T-cell (primary cell): ENCODE measurements at regions of chr11 and their contacts with region 1.

Region 1: DNA sequence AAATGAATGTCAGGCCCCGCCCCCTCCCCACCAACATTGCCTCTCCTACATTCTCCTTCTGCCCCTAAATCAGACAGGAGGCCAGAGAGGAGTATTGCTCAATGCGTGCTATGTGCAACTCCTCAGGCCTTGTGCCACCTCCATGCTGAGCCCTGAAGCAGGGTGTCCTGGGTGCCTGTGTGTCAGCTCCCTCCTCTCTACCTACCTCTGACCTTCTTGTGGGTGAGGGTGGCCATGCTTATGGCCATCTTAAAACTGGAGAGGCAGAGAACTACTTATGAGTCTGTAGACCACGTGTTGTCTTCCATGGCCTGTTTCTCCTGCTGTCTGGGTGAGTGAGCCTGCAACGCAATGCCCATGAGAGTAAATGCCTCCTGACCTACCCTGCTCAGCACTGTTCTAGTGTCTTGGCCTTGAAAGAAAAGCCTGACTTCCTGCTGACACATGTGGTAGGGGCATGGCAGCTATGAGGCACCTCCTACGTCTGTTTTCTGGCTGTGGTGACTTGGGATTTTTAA is 10.5 kb downstream of the MCAM start:
- DNase-seq: peak in 32 of 35 experiments; percentile 27 to 86 (median 61)
- ATAC-seq: peak; percentile 89 to 97 (median 92)
- H3K4me3 ChIP-seq: peak overlapping the region in 1 of 2 donors; percentile 33
- H3K4me3 Mint-ChIP-seq: peak overlapping the region; percentile 10 to 79 (median 44)
- H3K27ac ChIP-seq: peak overlapping the region; percentile 71
- H3K27ac Mint-ChIP-seq: peak overlapping the region; percentile 92 to 95
- H3K4me1 ChIP-seq: peaks cover 27 to 30% of the 10 kb centered on the region in 2 experiments
- H3K4me1 Mint-ChIP-seq: peaks cover 30 to 33% (median 32%) of the 10 kb centered on the region in 3 donors
- H3K27me3 ChIP-seq: no peaks in the 10 kb centered on the region
- H3K27me3 Mint-ChIP-seq: no peaks in the 10 kb centered on the region

Region 2: GRCh38 chr11:119169282-119169719 is 137.1 kb before region 1 on chr11:
- CTCF ChIA-PET with region 1: interaction called in 1 of 2 experiments, 10 read pairs
- POLR2A ChIA-PET with region 1: interaction called in 1 of 2 experiments, 8 read pairs
- DNase-seq: peak in 18 of 35 experiments; percentile 4 to 39 (median 15)
- ATAC-seq: peak; percentile 30 to 39 (median 36)
- H3K4me3 ChIP-seq: peak overlapping the region; percentile 77 to 85
- H3K4me3 Mint-ChIP-seq: peak overlapping the region; percentile 81 to 86 (median 85)
- H3K27ac ChIP-seq: peak overlapping the region; percentile 55
- H3K27ac Mint-ChIP-seq: peak overlapping the region; percentile 73 to 78
- H3K4me1 ChIP-seq: peaks cover 0 to 14% of the 10 kb centered on the region in 2 experiments
- H3K4me1 Mint-ChIP-seq: peaks cover 7 to 20% (median 8%) of the 10 kb centered on the region in 3 donors
- H3K27me3 ChIP-seq: no peaks in the 10 kb centered on the region
- H3K27me3 Mint-ChIP-seq: no peaks in the 10 kb centered on the region